ENCODE measurements at regions of chr19 and their contacts with region 1.

Region 1: DNA sequence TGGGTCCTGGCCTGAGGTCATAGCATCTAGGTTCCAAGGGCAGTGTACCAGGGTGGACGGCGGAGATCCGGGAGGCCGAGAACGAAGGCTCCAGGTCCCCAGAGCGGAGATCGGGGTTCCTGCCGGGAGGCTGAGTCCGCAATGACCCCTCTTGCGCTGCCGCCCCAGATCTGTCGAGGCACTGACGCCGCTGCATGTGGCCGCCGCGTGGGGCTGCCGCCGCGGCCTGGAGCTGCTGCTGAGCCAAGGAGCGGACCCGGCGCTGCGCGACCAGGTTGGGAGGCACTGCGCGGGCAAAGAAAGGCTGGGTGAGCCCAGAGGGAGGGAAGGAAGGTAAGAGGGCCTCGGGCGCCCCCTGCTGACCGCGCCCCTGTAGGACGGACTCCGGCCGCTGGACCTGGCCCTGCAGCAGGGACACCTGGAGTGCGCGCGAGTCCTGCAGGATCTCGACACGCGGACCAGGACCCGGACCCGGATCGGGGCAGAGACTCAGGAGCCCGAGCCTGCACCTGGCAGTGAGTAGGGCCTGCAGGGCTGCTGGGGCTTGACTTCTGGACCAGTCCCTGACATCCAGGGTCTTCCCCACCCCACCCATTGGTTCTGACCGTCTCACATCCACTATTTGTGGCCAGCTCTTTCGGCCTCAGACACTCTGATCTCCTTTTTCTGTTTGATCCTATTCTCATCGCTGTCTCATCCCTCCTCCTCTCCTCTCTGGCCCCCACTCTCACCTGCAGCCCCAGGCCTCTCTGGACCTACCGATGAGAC is 971 bp downstream of the ANKLE1 start:
- DNase-seq: no peak
- H3K4me3 ChIP-seq: peak overlapping the region; percentile 22 to 64 (median 38)
- H3K27ac ChIP-seq: no peak overlapping the region
- H3K4me1 ChIP-seq: peaks cover 14 to 20% (median 17%) of the 10 kb centered on the region in 3 donors
- H3K27me3 ChIP-seq: peaks cover 0 to 20% (median 2%) of the 10 kb centered on the region in 4 donors
- CTCF ChIP-seq: peak; percentile 88 to 92 (median 90)
- POLR2A ChIP-seq: no peak

Region 2: DNA sequence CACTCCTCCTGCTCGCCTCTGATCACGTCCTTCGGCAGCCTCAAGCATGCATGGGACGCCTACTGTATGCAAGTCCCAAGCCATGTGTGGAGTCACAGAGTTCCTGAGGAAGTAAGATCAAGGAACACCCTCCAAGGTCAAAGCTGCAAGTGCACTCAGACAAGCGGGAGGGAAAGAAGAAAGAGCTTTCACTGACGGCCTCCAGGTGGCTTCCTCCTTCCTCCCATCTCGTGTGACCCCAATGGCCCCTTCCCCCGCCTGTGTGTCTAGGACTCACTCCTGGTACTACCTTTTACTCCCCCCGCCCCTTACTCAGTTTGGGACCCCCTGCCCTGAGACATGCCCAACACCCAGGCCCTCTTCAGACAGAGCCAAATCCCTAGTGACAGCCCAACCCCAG is 213.5 kb before region 1 on chr19:
- intact Hi-C with region 1: loop called (anchors 5 kb)
- DNase-seq: no peak
- H3K4me3 ChIP-seq: no peak overlapping the region
- H3K27ac ChIP-seq: no peak overlapping the region
- H3K4me1 ChIP-seq: peaks cover 6 to 16% (median 6%) of the 10 kb centered on the region in 3 donors
- H3K27me3 ChIP-seq: no peaks in the 10 kb centered on the region
- CTCF ChIP-seq: no peak
- POLR2A ChIP-seq: no peak

Region 3: DNA sequence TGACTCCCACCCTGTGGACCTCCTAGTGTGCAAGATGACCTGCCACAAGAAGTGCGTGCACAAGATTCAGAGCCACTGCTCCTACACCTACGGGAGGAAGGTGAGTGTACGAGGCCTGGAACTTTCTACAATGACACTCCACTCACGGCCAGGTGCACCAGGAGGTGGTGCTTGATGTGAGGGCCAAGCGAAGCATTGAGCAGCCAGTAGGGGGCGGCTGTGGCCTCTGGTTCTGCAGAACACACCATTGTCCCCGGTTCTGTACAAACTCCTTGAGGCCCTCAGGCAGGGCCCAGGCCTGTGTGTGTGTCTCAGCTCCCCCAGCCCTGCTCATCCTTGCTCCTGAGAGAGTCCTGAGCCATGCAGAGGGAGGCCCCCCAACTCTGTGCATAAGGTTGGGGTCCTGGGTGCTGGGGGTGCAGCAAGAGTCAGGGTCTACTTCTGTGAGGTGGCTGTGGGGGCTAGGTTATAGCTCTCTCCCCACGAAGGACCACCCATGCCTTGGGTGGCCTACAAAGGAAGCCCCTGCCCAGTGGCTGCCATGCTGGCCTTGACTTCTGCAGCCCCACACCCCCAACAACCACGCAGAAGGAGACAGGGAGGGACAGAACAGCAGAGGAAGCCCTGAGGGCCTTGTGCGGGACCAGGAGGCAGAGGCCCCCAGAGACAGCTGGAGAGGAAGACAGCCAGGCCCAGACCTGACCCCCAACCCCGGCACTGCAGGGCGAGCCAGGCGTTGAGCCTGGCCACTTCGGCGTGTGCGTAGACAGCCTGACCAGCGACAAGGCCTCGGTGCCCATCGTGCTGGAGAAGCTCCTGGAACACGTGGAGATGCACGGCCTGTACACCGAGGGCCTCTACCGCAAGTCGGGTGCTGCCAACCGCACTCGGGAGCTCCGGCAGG is 77.2 kb before region 1 on chr19:
- intact Hi-C with region 1: loop called (anchors 10 kb)
- DNase-seq: no peak
- H3K4me3 ChIP-seq: no peak overlapping the region
- H3K27ac ChIP-seq: no peak overlapping the region
- H3K4me1 ChIP-seq: no peaks in the 10 kb centered on the region
- H3K27me3 ChIP-seq: no peaks in the 10 kb centered on the region
- CTCF ChIP-seq: peak in 5 of 6 experiments; percentile 53 to 81 (median 71)
- POLR2A ChIP-seq: no peak

Region 4: DNA sequence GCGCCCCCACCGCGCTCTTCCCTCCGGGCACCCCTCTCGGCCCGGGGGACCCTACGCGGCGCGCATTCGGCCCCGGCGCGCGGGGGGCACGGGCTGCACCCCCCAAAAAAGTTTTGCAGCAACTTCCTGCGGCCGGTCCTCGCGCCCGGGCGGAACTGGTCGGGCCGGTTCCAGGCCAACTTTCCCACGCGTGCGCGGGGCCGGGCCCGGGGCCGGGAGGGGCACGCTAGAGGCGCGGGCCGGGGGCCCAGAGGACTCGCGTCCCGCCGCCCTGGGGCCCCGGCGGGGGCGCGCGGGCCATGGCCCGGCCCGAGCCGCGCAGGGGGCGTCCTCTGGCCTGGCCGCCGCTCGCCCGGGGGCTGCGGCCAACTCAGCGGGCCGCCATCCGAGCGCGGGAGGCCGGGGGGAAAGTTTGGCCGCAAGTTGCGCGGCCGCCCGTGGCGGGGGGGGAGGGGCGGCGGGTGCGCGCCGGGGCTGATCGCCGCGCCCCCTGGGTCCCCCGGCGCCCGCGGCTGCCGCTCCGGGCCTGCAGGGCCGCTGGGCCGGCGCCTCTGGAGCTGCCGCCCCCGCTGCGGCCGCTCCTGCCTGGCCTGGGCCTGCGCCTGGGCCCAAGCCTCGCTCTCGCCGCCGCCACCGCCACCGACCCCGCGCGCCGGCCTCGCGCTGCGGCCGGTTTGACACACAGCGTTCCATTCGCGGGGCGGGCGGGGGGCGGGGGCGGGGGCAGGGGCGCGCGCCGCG is 37.3 kb before region 1 on chr19 and contains the start of gene NR2F6:
- intact Hi-C with region 1: no loop called
- DNase-seq: no peak
- H3K4me3 ChIP-seq: peak within 1 kb of the TSS; percentile 81 to 95 (median 90)
- H3K27ac ChIP-seq: peak within 1 kb of the TSS; percentile 90 to 94 (median 92)
- H3K4me1 ChIP-seq: peaks cover 23 to 89% (median 41%) of the 10 kb centered on the region in 3 donors
- H3K27me3 ChIP-seq: no peaks in the 10 kb centered on the region
- CTCF ChIP-seq: no peak
- POLR2A ChIP-seq: peak in 1 of 4 donors; percentile 20
- total RNA-seq, gene NR2F6: 52.8 to 115 (median 82.7) TPM

Measured in esophagus squamous epithelium (tissue), 5 donors.